Activated naive CD4-positive, alpha-beta T cell treated with anti-CD3 and anti-CD28 coated beads for 36 hours (primary cell): ENCODE measurements at regions of chr22 and their contacts with region 1.

Region 1: GRCh38 chr22:42520663-42521546 is 1.3 kb upstream of the RRP7A start:
- DNase-seq: no peak
- H3K4me3 Mint-ChIP-seq: peak overlapping the region; percentile 6
- H3K27ac Mint-ChIP-seq: no peak overlapping the region
- H3K4me1 Mint-ChIP-seq: peaks cover 13% of the 10 kb centered on the region
- H3K27me3 Mint-ChIP-seq: no peaks in the 10 kb centered on the region

Region 2: GRCh38 chr22:41713004-41713403 is 807.9 kb before region 1 on chr22:
- CTCF ChIA-PET with region 1: no interaction called
- intact Hi-C with region 1: no loop called
- DNase-seq: no peak
- H3K4me3 Mint-ChIP-seq: no peak overlapping the region
- H3K27ac Mint-ChIP-seq: no peak overlapping the region
- H3K4me1 Mint-ChIP-seq: no peaks in the 10 kb centered on the region
- H3K27me3 Mint-ChIP-seq: no peaks in the 10 kb centered on the region

Region 3: GRCh38 chr22:42500161-42500835 is 20.6 kb before region 1 on chr22:
- CTCF ChIA-PET with region 1: no interaction called
- intact Hi-C with region 1: loop called (anchors 2 kb)
- DNase-seq: peak; percentile 87
- H3K4me3 Mint-ChIP-seq: peak overlapping the region; percentile 39
- H3K27ac Mint-ChIP-seq: no peak overlapping the region
- H3K4me1 Mint-ChIP-seq: peaks cover 8% of the 10 kb centered on the region
- H3K27me3 Mint-ChIP-seq: no peaks in the 10 kb centered on the region